GM18951 (cell line): ENCODE measurements at regions of chr22 and their contacts with region 1.

Region 1: DNA sequence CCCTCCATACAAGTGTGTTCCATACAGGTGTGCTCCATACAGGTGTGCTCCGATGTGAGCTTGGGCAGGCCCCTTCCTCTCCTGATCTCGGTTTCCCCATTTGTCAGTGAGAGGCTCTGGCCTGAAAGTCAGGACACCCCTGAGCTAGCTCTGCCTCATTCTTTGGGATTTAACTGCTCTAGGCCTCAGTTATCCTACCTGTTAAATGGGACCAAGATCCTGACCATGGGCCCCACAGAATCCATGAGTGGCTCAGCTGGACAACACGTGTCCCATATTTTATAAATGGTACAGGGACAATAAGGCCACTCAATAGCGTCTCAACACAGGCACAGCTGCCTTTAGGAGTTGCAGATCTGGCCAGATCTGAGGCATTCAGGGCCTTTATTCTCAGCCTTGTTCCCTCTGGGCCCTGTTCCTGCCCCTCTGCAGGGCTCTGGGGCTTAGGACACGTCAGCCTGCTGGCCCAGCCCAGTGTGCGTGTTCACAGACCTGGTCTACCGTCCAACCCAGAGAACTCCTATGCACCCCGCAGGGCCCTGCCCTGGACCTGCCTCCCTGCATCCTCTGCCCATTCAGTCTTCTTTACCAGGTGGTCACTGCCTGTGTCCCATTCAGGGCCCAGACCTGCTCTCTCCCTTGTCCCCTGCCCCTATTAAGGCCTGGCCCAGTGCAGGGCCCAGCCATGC is 18.9 kb upstream of the IGLL1 start:
- POLR2A ChIP-seq: no peak

Region 2: GRCh38 chr22:23450434-23450795 is 148.5 kb before region 1 on chr22:
- in situ Hi-C with region 1: no loop called
- POLR2A ChIP-seq: no peak

Region 3: DNA sequence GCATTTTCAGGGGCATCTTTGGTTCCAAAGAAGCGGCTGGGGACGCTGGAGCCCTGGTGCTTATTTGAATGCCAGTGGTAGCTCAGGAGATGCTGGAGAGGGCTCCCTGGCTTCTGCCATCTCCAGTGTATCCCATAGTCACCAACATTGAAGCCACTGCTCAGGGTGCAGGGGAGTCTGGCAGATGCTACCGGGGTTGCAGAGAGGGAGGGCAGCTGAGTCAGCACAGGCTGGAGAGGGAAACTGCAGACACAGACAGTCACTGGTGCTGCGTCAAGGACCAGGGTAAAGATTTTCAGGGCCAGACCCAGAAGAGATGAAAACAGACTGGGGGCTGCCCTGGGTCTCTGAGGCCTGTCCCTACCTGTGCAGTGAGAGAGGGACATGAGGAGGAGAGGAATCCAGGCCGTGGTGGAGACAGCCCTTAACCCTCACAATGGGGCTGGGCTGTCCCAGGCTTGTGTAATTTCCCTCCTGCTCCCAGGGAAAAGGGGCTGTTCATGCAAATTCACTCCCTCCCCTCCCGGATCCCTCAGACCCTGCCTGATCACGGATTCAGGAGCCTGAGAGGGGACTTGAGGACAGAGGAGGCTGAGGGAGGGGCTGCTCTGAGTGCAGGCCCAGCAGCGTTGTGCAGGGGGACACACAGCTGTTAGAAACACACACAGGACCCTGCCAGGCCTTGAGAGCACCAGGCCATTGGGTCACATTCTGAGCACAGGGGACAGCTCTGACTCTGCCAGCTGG is 1838.6 kb after region 1 on chr22:
- in situ Hi-C with region 1: loop called (anchors 5 kb)
- POLR2A ChIP-seq: no peak